ENCODE measurements at regions of chr12 and their contacts with region 1.

Region 1: DNA sequence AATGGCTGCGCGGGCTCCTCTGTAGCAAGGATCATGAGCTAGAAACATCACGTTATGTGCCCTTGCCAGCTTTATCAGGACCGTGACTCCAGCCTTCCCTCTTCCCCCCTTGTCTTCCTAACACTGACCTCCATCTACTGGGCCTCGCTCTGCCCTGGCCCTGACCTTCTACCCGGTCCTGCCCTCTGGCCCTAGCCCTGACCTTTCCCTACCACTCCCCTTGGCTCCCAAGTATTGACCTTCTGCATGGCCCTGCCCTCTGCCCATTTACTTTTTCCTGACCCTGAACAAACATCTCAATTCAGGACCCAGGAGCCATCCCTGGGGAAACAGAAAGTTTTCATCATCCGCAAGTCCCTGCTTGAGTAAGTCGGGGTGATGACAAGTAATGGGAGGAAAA is 2.0 kb downstream of the SOAT2 start:
- DNase-seq: no peak
- ATAC-seq: no peak
- H3K4me3 ChIP-seq: no peak overlapping the region
- H3K27ac ChIP-seq: no peak overlapping the region
- H3K4me1 ChIP-seq: peaks cover 3% of the 10 kb centered on the region; the same call in 1 of the 2 replicates
- H3K27me3 ChIP-seq: no peaks in the 10 kb centered on the region
- CTCF ChIP-seq: no peak
- POLR2A ChIP-seq: no peak
- RAD21 ChIP-seq: no peak

Region 2: DNA sequence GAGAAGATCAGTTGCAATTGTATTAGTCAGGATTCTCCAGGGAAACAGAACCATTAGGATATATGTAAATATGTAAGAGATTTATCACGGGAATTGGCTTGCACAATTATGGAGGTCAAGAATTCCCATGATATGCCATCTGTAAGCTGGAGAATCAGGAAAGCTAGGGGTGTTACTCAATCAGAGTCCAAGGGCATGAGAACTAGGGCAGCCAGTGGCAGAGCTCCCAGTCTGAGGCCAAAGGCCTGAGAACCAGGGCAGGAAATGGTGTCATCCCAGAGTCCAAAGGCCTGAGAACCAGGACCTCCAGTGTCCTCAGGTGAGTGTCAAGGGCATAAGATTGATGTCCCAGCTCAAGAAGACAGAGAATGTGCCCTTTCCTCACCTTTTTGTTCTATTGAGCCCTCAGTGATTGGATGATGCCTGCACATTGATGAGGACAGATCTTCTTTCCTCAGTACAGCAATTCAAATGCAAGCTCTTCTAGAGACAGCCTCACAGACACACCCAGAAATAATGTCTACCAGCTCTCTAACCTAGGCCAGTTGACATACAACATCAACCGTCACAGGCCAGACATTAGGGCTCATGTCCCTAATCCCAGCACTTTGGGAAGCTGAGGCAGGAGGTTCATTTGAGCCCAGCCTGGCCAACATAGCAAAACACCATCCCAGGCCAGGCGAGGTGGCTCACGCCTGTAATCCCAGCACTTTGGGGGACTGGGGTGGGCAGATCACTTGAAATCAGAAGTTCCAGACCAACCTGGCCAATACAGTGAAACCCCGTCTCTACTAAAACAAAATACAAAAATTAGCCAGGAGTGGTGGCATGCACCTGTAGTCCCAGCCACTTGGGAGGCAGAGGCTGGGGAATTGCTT is 40.4 kb after region 1 on chr12:
- CTCF ChIA-PET with region 1: no interaction called
- POLR2A ChIA-PET with region 1: no interaction called
- dilution Hi-C with region 1: no loop called
- in situ Hi-C with region 1: no loop called
- intact Hi-C with region 1: loop called (anchors 5 kb)
- DNase-seq: peak; percentile 42
- ATAC-seq: peak; percentile 37; the same call in 1 of the 2 replicates
- H3K4me3 ChIP-seq: no peak overlapping the region
- H3K27ac ChIP-seq: no peak overlapping the region
- H3K4me1 ChIP-seq: no peaks in the 10 kb centered on the region
- H3K27me3 ChIP-seq: no peaks in the 10 kb centered on the region
- CTCF ChIP-seq: no peak
- POLR2A ChIP-seq: no peak
- RAD21 ChIP-seq: no peak

Region 3: GRCh38 chr12:53190108-53190729 is 85.0 kb after region 1 on chr12:
- CTCF ChIA-PET with region 1: no interaction called
- POLR2A ChIA-PET with region 1: no interaction called
- dilution Hi-C with region 1: no loop called
- in situ Hi-C with region 1: no loop called
- intact Hi-C with region 1: no loop called
- DNase-seq: peak; percentile 59
- ATAC-seq: peak; percentile 90
- H3K4me3 ChIP-seq: no peak overlapping the region
- H3K27ac ChIP-seq: no peak overlapping the region
- H3K4me1 ChIP-seq: no peaks in the 10 kb centered on the region; the same call in 1 of the 2 replicates
- H3K27me3 ChIP-seq: no peaks in the 10 kb centered on the region
- CTCF ChIP-seq: peak; percentile 70
- POLR2A ChIP-seq: no peak
- RAD21 ChIP-seq: peak; percentile 59